ENCODE measurements at regions of chr2 and their contacts with region 1.

Region 1: GRCh38 chr2:126776692-126777619 is 121.0 kb downstream of the GYPC start:
- DNase-seq: peak; percentile 87
- ATAC-seq: peak; percentile 89
- H3K4me3 Mint-ChIP-seq: peak overlapping the region; percentile 88
- H3K27ac Mint-ChIP-seq: peak overlapping the region; percentile 89
- H3K4me1 Mint-ChIP-seq: peaks cover 15% of the 10 kb centered on the region
- H3K27me3 Mint-ChIP-seq: peaks cover 6% of the 10 kb centered on the region
- CTCF ChIP-seq: peak; percentile 100

Region 2: GRCh38 chr2:126244937-126245336 is 532.0 kb before region 1 on chr2:
- CTCF ChIA-PET with region 1: no interaction called
- POLR2A ChIA-PET with region 1: no interaction called
- intact Hi-C with region 1: loop called (anchors 10 kb)
- DNase-seq: peak; percentile 77
- ATAC-seq: peak; percentile 45
- H3K4me3 Mint-ChIP-seq: no peak overlapping the region
- H3K27ac Mint-ChIP-seq: no peak overlapping the region
- H3K4me1 Mint-ChIP-seq: no peaks in the 10 kb centered on the region
- H3K27me3 Mint-ChIP-seq: no peaks in the 10 kb centered on the region
- CTCF ChIP-seq: peak; percentile 34

Region 3: DNA sequence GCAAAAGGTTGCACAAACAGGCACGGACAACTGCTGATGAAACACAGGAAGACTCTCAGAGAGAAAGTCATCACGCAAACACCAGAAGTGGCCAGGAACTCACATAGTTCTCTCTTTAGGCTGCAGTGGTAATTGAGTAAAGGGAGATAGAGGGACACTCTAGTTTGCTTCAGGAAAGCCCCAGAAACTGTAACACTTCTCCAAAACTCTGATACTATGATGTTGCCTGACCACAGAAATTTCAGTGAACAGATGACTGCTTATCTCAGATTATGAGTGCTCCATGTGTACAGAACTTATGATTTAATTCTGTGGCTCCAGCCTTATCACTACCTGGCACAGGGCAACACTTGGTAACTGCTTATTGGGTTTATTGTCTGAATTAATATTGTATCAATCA is 432.5 kb before region 1 on chr2:
- CTCF ChIA-PET with region 1: no interaction called
- POLR2A ChIA-PET with region 1: no interaction called
- intact Hi-C with region 1: no loop called
- DNase-seq: no peak
- ATAC-seq: no peak
- H3K4me3 Mint-ChIP-seq: no peak overlapping the region
- H3K27ac Mint-ChIP-seq: no peak overlapping the region
- H3K4me1 Mint-ChIP-seq: no peaks in the 10 kb centered on the region
- H3K27me3 Mint-ChIP-seq: peaks cover 2% of the 10 kb centered on the region
- CTCF ChIP-seq: no peak

Region 4: DNA sequence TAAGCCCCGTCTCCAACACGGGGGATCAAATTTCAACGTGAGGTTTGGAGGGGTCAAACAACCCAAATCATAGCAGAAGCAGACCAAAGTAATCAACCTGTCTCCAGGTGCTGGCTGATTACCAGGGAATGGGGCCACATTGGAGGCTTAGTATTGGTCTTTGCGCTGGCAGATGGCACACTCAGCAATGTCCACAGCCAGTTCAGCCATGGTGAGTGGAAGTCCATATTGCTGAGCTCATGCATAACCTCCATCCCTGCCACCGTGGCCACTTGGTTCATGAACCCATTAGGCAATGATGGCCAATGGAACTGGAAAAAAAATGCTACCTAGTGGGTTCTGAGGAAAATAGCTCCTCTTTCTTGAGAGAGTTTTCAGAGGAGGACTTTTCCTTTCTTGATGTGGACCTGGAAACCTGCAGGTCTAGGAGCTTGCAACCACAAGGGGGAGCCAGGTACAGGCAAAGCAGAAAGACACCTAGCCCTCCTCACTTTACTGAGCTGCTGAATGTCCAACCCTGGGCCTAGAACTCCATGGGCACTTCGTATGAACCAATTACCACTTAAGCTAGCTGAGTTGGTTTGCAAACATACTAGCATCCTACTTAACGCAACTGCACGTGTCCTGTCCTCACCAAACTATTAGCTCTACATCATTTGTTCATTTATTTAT is 249.0 kb before region 1 on chr2:
- CTCF ChIA-PET with region 1: interaction called, 116 read pairs
- POLR2A ChIA-PET with region 1: no interaction called
- intact Hi-C with region 1: loop called (anchors 1 kb)
- DNase-seq: peak; percentile 87
- ATAC-seq: peak; percentile 84
- H3K4me3 Mint-ChIP-seq: no peak overlapping the region
- H3K27ac Mint-ChIP-seq: no peak overlapping the region
- H3K4me1 Mint-ChIP-seq: no peaks in the 10 kb centered on the region
- H3K27me3 Mint-ChIP-seq: no peaks in the 10 kb centered on the region
- CTCF ChIP-seq: peak; percentile 64

Region 5: GRCh38 chr2:126657636-126658318 is 119.2 kb before region 1 on chr2:
- CTCF ChIA-PET with region 1: interaction called, 12 read pairs
- POLR2A ChIA-PET with region 1: no interaction called
- intact Hi-C with region 1: loop called (anchors 5 kb)
- DNase-seq: peak; percentile 90
- ATAC-seq: peak; percentile 74
- H3K4me3 Mint-ChIP-seq: peak overlapping the region; percentile 97
- H3K27ac Mint-ChIP-seq: peak overlapping the region; percentile 100
- H3K4me1 Mint-ChIP-seq: peaks cover 60% of the 10 kb centered on the region
- H3K27me3 Mint-ChIP-seq: no peaks in the 10 kb centered on the region
- CTCF ChIP-seq: no peak

Region 6: DNA sequence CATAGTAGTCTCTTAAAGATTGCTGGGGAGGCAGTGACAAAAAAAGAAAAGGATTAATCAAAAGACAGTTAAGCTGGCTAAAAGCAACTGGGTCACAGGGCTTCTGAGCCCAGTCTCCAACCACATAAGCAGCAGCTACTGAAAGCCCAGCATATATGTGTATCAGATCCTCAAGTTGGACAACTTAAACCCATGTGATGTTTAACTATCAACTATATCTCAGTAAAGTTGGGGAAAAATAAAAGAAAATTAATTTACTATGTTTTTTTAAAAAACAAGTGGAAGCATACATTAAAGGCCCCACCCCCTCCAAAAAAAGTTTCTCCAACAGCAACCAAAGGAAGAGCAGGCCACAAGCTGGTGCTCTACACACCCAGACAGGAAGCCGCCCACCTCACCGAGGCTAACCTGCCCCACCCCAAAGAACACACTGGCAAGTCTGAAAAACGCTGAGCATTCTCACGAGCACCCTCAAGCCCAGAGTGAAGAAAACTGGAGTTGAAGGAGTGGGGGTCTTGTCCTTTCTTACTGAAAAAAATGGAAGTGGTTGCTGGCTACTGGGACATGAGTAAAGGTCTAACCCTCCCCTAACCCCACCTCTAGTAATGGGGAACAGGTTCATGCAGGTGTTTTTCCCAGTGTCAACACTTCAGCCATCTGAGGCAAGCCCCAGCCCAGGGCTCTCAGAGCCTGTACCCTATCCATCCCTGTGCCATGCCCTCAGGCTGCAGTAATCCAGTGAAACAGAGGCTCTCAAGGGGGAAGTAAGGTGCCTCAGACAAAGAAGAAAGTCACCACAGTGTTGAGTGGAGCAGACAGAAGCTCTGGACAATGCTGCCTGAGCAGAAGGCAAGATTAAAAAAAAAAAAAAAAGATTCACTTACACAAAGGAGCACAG is 14.7 kb before region 1 on chr2:
- CTCF ChIA-PET with region 1: interaction called, 13 read pairs
- POLR2A ChIA-PET with region 1: interaction called, 3 read pairs
- intact Hi-C with region 1: no loop called
- DNase-seq: peak; percentile 86
- ATAC-seq: peak; percentile 95
- H3K4me3 Mint-ChIP-seq: peak overlapping the region; percentile 20
- H3K27ac Mint-ChIP-seq: peak overlapping the region; percentile 86
- H3K4me1 Mint-ChIP-seq: peaks cover 48% of the 10 kb centered on the region
- H3K27me3 Mint-ChIP-seq: no peaks in the 10 kb centered on the region
- CTCF ChIP-seq: no peak